HCT116 (cell line): ENCODE measurements at regions of chr9 and their contacts with region 1.

Region 1: GRCh38 chr9:128635283-128636023 is 21.2 kb downstream of the DYNC2I2 start:
- DNase-seq: peak; percentile 94
- ATAC-seq: peak; percentile 90
- H3K4me3 ChIP-seq: peak overlapping the region; percentile 35 to 53
- H3K27ac ChIP-seq: peak overlapping the region; percentile 99
- H3K4me1 ChIP-seq: peaks cover 28 to 46% of the 10 kb centered on the region in 2 experiments
- H3K27me3 ChIP-seq: no peaks in the 10 kb centered on the region
- CTCF ChIP-seq: peak in 2 of 3 experiments; percentile 85 to 95; a peak in 4 of 6 replicates
- POLR2A ChIP-seq: no peak
- RAD21 ChIP-seq: no peak

Region 2: DNA sequence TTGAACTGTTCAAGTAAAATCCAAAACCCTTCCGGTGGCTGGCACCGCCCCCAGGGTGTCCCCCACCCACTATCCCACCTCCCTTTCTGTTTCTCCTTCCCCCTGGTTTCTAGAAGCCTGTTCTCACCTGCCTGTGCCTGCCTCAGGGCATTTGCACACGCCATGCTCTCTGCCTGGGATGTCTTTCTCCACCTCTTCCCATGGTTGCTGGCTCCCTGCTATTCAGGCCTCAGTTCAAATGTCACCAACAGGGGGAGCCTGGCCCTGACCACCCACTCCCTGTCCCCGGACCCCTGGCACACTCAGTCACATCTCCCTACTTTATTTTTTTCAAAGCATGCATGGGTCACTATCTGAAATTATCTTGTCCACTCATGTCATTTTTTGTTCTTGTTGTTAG is 614.8 kb before region 1 on chr9:
- CTCF ChIA-PET with region 1: no interaction called
- POLR2A ChIA-PET with region 1: no interaction called
- RAD21 ChIA-PET with region 1: no interaction called
- intact Hi-C with region 1: no loop called
- DNase-seq: no peak
- ATAC-seq: peak; percentile 58
- H3K4me3 ChIP-seq: no peak overlapping the region
- H3K27ac ChIP-seq: no peak overlapping the region
- H3K4me1 ChIP-seq: peaks cover 0 to 8% of the 10 kb centered on the region in 2 experiments; a peak in 2 of 4 replicates
- H3K27me3 ChIP-seq: no peaks in the 10 kb centered on the region
- CTCF ChIP-seq: peak; percentile 16 to 55 (median 47); a peak in 5 of 6 replicates
- POLR2A ChIP-seq: no peak
- RAD21 ChIP-seq: no peak

Region 3: GRCh38 chr9:128310461-128310860 is 325.0 kb before region 1 on chr9:
- CTCF ChIA-PET with region 1: no interaction called
- POLR2A ChIA-PET with region 1: no interaction called
- RAD21 ChIA-PET with region 1: no interaction called
- intact Hi-C with region 1: no loop called
- DNase-seq: no peak
- ATAC-seq: no peak
- H3K4me3 ChIP-seq: no peak overlapping the region
- H3K27ac ChIP-seq: no peak overlapping the region
- H3K4me1 ChIP-seq: peaks cover 35 to 42% of the 10 kb centered on the region in 2 experiments
- H3K27me3 ChIP-seq: no peaks in the 10 kb centered on the region
- CTCF ChIP-seq: no peak
- POLR2A ChIP-seq: no peak
- RAD21 ChIP-seq: no peak

Region 4: DNA sequence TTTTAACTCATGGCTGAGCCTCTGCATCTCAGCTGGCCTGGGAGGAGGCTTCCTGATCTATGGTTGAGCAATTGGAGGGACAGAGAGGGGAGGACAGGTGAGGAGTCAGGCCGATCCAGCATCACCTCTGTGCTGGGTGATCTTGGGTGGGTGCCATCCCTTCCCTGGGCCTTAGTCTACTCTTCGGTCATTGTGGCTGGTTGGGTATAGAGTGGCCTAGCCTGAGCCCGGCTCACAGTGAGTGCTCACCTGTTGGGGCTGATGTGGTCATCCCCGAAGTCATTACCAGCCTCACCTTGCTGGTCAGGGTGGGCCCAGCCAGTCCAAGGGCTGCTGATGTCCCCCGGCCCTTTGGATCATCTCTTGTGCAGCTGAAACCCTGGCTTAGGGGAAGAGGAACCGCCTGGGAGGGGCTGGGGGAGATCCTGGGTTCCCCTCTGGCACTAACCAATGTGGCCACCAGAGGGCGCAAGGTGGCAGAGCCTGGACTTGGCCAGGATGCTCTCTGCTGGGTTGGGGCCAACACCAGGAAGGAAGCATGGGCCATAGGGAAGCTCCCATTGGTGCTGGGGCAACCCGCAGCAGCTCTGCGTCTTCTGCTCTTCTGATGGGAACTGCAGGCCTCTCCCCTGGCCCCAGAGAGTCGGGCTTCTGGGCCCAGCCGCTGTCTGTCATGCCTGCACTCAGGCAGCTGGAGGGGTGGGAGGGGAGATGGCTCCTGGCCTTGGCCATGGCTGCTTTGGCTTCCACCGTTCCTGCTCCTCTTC is 196.9 kb before region 1 on chr9:
- CTCF ChIA-PET with region 1: interaction called, 11 read pairs
- POLR2A ChIA-PET with region 1: no interaction called
- RAD21 ChIA-PET with region 1: interaction called, 3 to 5 read pairs
- intact Hi-C with region 1: no loop called
- DNase-seq: no peak
- ATAC-seq: peak; percentile 97
- H3K4me3 ChIP-seq: no peak overlapping the region
- H3K27ac ChIP-seq: peak overlapping the region; percentile 41; the same call in 1 of the 2 replicates
- H3K4me1 ChIP-seq: peaks cover 2 to 10% of the 10 kb centered on the region in 2 experiments; a peak in 2 of 4 replicates
- H3K27me3 ChIP-seq: no peaks in the 10 kb centered on the region
- CTCF ChIP-seq: peak; percentile 67 to 96 (median 92)
- POLR2A ChIP-seq: no peak
- RAD21 ChIP-seq: peak; percentile 80

Region 5: GRCh38 chr9:128565578-128565977 is 69.9 kb before region 1 on chr9:
- CTCF ChIA-PET with region 1: no interaction called
- POLR2A ChIA-PET with region 1: no interaction called
- RAD21 ChIA-PET with region 1: no interaction called
- intact Hi-C with region 1: no loop called
- DNase-seq: no peak
- ATAC-seq: no peak
- H3K4me3 ChIP-seq: no peak overlapping the region
- H3K27ac ChIP-seq: no peak overlapping the region
- H3K4me1 ChIP-seq: no peaks in the 10 kb centered on the region
- H3K27me3 ChIP-seq: no peaks in the 10 kb centered on the region
- CTCF ChIP-seq: no peak
- POLR2A ChIP-seq: no peak
- RAD21 ChIP-seq: no peak

Region 6: GRCh38 chr9:128702445-128702948 is 67.0 kb after region 1 on chr9 and contains the start of gene PKN3:
- CTCF ChIA-PET with region 1: no interaction called
- POLR2A ChIA-PET with region 1: interaction called, 4 read pairs
- RAD21 ChIA-PET with region 1: no interaction called
- intact Hi-C with region 1: loop called (anchors 2 kb)
- DNase-seq: peak; percentile 69
- ATAC-seq: peak; percentile 75
- H3K4me3 ChIP-seq: peak within 1 kb of the TSS; percentile 83 to 93
- H3K27ac ChIP-seq: peak within 1 kb of the TSS; percentile 87
- H3K4me1 ChIP-seq: peaks cover 18 to 39% of the 10 kb centered on the region in 2 experiments
- H3K27me3 ChIP-seq: no peaks in the 10 kb centered on the region
- CTCF ChIP-seq: peak in 2 of 3 experiments; percentile 75 to 79; a peak in 4 of 6 replicates
- POLR2A ChIP-seq: peak; percentile 21
- RAD21 ChIP-seq: no peak
- total RNA-seq, gene PKN3: 37.9 TPM

Region 7: DNA sequence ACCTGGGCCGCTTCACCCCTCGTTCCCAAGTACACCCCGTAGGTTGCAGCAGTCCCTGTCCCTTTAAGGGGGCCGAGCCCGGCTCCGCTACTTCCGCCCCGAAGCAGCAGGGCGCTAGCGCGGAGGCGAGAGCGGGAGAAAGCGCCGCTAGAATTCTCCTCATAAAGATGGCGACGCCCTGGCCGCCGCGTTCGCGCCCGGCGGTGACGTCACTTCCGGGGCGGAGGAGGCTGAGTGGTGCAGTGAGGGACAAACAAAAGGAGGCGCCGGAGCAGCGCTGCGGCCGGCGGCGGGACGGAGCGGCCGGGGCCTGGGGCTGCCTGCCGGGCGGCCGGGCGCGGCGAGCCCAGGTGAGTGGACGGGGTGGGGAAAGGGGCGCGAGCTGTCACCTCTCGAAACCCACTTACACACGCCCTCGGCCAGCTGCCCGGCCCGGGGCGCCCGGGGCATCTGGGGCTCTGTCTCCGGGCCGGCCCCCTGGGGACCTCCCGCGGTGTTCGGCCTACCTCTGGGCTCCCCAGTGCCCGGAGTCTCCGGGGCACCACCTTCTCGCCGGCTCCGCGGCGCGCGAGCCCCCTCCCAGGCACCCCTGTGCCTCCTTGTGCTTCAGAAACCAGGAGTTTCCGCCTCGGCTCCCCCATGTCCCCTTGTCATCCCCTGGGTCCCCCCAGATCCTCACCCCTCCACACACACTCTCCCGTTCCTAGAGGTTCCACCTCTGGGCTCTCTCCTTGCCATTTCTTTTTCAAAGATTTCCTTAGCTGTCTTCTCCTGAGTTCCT is 246.6 kb after region 1 on chr9 and contains the starts of genes KYAT1 and LRRC8A:
- CTCF ChIA-PET with region 1: interaction called, 3 read pairs
- POLR2A ChIA-PET with region 1: no interaction called
- RAD21 ChIA-PET with region 1: no interaction called
- intact Hi-C with region 1: loop called (anchors 5 kb)
- DNase-seq: peak; percentile 92
- ATAC-seq: peak; percentile 88
- H3K4me3 ChIP-seq: peak within 1 kb of the TSS; percentile 55 to 100
- H3K27ac ChIP-seq: peak within 1 kb of the TSS; percentile 76
- H3K4me1 ChIP-seq: peaks cover 7 to 25% of the 10 kb centered on the region in 2 experiments; a peak in 2 of 4 replicates
- H3K27me3 ChIP-seq: no peaks in the 10 kb centered on the region
- CTCF ChIP-seq: 0 out of 6 replicates have a peak, but pooled peaks of 1 of the 3 experiments have one; percentile 5
- POLR2A ChIP-seq: peak; percentile 75
- RAD21 ChIP-seq: no peak
- total RNA-seq, gene KYAT1: 10.1 TPM
- total RNA-seq, gene LRRC8A: 22.0 TPM

Region 8: GRCh38 chr9:129630967-129631672 is 995.7 kb after region 1 on chr9:
- CTCF ChIA-PET with region 1: no interaction called
- POLR2A ChIA-PET with region 1: no interaction called
- RAD21 ChIA-PET with region 1: no interaction called
- intact Hi-C with region 1: no loop called
- DNase-seq: no peak
- ATAC-seq: no peak
- H3K4me3 ChIP-seq: no peak overlapping the region
- H3K27ac ChIP-seq: no peak overlapping the region; the same call in 1 of the 2 replicates
- H3K4me1 ChIP-seq: peaks cover 11 to 23% of the 10 kb centered on the region in 2 experiments
- H3K27me3 ChIP-seq: no peaks in the 10 kb centered on the region
- CTCF ChIP-seq: no peak
- POLR2A ChIP-seq: no peak
- RAD21 ChIP-seq: no peak